Natural killer cell (primary cell): ENCODE measurements at regions of chr13 and their contacts with region 1.

Region 1: DNA sequence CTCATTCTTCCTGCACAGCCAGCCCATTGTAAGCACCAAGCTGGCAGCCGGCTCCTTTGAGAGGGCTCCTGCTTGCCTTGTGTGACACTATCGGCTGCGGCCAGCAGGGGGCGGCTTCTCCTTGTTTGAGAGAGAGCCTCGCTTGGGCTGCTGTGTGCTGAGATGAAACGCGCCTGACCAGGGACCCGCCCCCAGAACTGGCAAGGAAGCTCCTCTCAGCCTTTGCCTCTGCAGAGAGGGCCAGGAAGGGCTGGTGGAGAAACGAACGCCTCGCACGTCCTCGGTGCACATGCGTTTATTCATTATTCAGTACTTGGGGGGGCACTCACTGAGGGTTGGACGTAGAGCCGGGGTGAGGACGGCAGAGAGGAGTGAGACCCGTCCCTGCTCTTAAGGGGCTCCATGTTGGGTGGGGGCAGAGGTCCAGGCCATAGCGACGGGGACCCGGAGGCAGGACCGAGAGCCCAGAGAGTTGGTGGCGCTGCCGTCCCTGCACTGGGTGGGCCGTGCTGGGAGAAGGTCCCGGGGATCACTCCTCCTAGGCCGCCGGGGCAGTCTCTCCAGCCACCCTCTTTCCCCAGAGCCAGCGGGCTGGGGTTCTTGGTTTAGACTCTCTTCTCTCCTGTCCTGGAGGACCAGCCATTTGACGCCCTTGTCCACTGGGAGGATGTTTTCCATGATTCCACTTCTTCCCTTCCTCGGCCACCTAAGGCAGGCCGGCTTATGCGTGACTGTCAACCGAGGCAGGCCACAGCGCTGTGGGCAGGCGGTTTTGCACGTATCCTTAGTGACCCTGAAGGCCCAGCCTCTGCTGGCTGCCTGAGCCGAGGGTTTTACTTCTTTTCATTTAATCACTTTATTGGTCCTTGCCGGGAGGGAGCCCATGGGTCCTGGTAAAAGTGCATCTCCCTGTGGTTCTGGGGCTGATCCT is 174.5 kb downstream of the KATNAL1 start:
- DNase-seq: peak; percentile 95 to 96
- ATAC-seq: peak; percentile 97 to 100 (median 100)
- H3K4me3 ChIP-seq: no peak overlapping the region
- H3K4me3 Mint-ChIP-seq: peak overlapping the region; percentile 78
- H3K27ac ChIP-seq: no peak overlapping the region
- H3K27ac Mint-ChIP-seq: peak overlapping the region; percentile 29 to 78
- H3K4me1 ChIP-seq: peaks cover 12% of the 10 kb centered on the region
- H3K4me1 Mint-ChIP-seq: peaks cover 20 to 23% of the 10 kb centered on the region in 2 donors
- H3K27me3 ChIP-seq: no peaks in the 10 kb centered on the region
- H3K27me3 Mint-ChIP-seq: no peaks in the 10 kb centered on the region
- CTCF ChIP-seq: peak; percentile 95

Region 2: DNA sequence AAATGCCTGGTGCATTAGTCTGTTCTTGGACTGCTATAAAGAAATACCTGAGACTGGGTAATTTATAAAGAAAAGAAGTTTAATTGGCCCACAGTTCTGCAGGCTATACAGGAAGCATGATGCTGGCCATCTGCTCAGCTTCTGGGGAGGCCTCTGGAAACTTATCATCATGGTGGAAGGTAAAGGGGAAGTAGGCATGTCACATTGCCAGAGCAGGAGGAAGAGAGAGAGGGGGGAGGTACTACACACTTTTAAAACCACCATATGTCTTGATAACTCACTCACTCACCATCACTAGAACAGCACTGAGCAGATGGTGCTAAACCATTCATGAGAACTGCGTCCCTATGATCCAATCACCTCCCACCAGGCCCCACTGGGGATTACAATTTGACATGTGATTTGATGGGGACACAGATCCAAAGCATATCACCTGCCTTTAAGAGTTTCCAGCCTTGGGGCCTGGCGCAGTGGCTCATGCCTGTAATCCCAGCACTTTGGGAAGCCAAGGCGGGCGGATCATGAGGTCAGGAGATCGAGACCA is 44.5 kb before region 1 on chr13:
- intact Hi-C with region 1: no loop called
- DNase-seq: no peak
- ATAC-seq: no peak
- H3K4me3 ChIP-seq: no peak overlapping the region
- H3K4me3 Mint-ChIP-seq: no peak overlapping the region
- H3K27ac ChIP-seq: no peak overlapping the region
- H3K27ac Mint-ChIP-seq: no peak overlapping the region
- H3K4me1 ChIP-seq: peaks cover 4% of the 10 kb centered on the region
- H3K4me1 Mint-ChIP-seq: peaks cover 0 to 9% of the 10 kb centered on the region in 2 donors
- H3K27me3 ChIP-seq: no peaks in the 10 kb centered on the region
- H3K27me3 Mint-ChIP-seq: peaks cover 4 to 12% of the 10 kb centered on the region in 2 donors
- CTCF ChIP-seq: no peak

Region 3: DNA sequence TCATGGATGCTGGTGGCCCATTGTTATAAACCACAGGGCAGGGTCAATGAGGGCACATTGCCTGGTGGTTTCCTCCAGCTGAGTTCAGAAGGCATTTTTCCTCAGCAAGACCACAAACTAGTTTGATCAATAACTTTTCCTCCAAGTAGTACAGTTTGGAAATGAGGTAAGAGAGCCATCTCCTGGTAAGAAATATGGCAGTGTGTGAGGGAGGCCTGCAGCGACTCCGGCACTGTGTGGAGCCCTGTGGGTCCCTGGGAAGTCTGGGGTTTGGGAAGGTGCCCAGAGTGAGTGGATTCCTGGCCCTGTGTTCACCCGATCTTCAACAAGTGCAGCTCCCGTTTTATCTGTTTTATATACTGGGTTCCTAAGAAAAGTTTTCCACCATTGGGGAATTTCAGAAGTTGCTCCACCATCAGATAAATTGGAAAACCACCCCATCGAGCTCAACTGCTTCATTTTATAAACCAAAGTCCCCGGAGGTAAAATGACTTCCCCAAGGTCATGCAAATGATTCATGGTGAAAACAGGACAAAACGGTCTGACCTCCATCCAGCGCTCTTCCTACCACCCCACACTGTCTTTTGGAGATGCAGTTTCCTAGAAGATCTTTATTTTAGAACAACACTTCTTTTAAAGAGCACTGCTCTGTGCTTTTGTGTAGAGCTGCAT is 26.0 kb after region 1 on chr13:
- intact Hi-C with region 1: loop called (anchors 1 kb)
- DNase-seq: peak in 1 of 2 donors; percentile 73
- ATAC-seq: peak; percentile 39 to 59 (median 55)
- H3K4me3 ChIP-seq: no peak overlapping the region
- H3K4me3 Mint-ChIP-seq: no peak overlapping the region
- H3K27ac ChIP-seq: no peak overlapping the region
- H3K27ac Mint-ChIP-seq: peak overlapping the region; percentile 74 to 95
- H3K4me1 ChIP-seq: peaks cover 55% of the 10 kb centered on the region
- H3K4me1 Mint-ChIP-seq: peaks cover 48 to 55% of the 10 kb centered on the region in 2 donors
- H3K27me3 ChIP-seq: no peaks in the 10 kb centered on the region
- H3K27me3 Mint-ChIP-seq: no peaks in the 10 kb centered on the region
- CTCF ChIP-seq: peak; percentile 51

Region 4: DNA sequence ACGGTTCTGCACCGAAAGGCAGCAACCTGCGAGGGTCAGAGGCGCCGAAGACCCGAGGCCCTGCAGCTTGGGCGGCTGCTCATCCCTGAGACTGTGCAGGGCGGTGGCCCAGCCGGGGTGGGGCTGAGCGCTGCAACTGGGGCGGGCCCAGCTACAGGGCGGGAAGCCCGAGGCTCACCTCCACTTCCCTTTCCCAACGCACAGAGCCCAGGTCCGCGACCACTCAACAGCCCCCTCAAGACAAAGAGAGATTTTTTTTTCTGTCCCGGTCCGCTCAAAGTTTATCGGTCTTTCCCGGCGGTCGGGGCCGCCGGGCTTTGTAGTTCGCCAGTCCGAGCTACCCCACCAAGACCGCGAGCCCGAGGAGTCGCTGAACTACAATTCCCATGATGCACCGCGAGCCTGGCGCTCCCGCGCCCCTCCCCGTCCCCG is 173.9 kb after region 1 on chr13:
- intact Hi-C with region 1: loop called (anchors 10 kb)
- DNase-seq: peak; percentile 82 to 95
- ATAC-seq: peak; percentile 88 to 96 (median 94)
- H3K4me3 ChIP-seq: peak overlapping the region; percentile 83
- H3K4me3 Mint-ChIP-seq: peak overlapping the region; percentile 88
- H3K27ac ChIP-seq: peak overlapping the region; percentile 79
- H3K27ac Mint-ChIP-seq: peak overlapping the region; percentile 42 to 89
- H3K4me1 ChIP-seq: peaks cover 12% of the 10 kb centered on the region
- H3K4me1 Mint-ChIP-seq: peaks cover 4 to 18% of the 10 kb centered on the region in 2 donors
- H3K27me3 ChIP-seq: no peaks in the 10 kb centered on the region
- H3K27me3 Mint-ChIP-seq: no peaks in the 10 kb centered on the region
- CTCF ChIP-seq: no peak

Region 5: DNA sequence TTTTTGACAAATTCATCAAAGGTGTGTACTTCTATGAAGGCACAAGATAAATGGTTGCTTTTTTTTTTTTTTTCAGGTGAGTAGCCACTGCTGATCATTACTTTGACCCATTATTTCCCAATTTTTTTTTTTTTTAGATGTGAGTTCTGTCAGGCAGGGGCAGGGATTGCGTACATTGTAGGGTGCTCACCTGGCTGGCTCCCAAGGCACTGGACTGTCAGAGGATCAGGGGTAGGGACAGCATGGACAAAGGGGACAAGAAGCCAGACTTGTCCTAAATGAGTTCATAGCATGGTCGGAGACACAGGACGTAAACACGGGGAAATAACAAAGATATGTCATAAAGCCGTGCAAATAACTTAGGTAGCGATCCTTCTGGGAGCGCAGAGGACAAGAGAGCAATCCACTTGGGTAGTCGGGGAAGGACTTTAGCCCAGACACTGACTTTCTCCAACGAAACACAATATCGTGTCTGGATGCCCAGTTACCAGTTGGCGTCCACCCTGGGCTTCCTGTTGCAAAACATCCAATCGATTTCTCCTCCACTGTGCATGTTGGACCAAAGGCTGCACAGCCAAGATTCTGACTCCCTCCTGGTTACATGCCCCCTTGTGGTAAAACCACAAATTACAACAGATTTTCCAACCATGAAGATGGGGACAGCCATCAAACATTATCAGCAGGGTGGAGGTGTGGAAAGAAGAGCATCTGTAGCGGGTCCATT is 201.9 kb after region 1 on chr13:
- intact Hi-C with region 1: loop called (anchors 2 kb)
- DNase-seq: peak in 1 of 2 donors; percentile 64
- ATAC-seq: peak in 2 of 3 donors; percentile 44 to 64
- H3K4me3 ChIP-seq: no peak overlapping the region
- H3K4me3 Mint-ChIP-seq: no peak overlapping the region
- H3K27ac ChIP-seq: no peak overlapping the region
- H3K27ac Mint-ChIP-seq: no peak overlapping the region
- H3K4me1 ChIP-seq: peaks cover 6% of the 10 kb centered on the region
- H3K4me1 Mint-ChIP-seq: peaks cover 0 to 6% of the 10 kb centered on the region in 2 donors
- H3K27me3 ChIP-seq: no peaks in the 10 kb centered on the region
- H3K27me3 Mint-ChIP-seq: no peaks in the 10 kb centered on the region
- CTCF ChIP-seq: peak; percentile 29

Region 6: GRCh38 chr13:30572859-30573275 is 440.0 kb after region 1 on chr13:
- intact Hi-C with region 1: loop called (anchors 10 kb)
- DNase-seq: peak in 1 of 2 donors; percentile 67
- ATAC-seq: peak; percentile 69 to 77 (median 69)
- H3K4me3 ChIP-seq: peak overlapping the region; percentile 5
- H3K4me3 Mint-ChIP-seq: peak overlapping the region; percentile 75
- H3K27ac ChIP-seq: peak overlapping the region; percentile 66
- H3K27ac Mint-ChIP-seq: peak overlapping the region; percentile 80 to 83
- H3K4me1 ChIP-seq: peaks cover 25% of the 10 kb centered on the region
- H3K4me1 Mint-ChIP-seq: peaks cover 33 to 40% of the 10 kb centered on the region in 2 donors
- H3K27me3 ChIP-seq: no peaks in the 10 kb centered on the region
- H3K27me3 Mint-ChIP-seq: peaks cover 21 to 25% of the 10 kb centered on the region in 2 donors
- CTCF ChIP-seq: no peak

Region 7: GRCh38 chr13:30802953-30803478 is 670.1 kb after region 1 on chr13:
- intact Hi-C with region 1: loop called (anchors 5 kb)
- DNase-seq: peak; percentile 73 to 90
- ATAC-seq: peak; percentile 92 to 99 (median 99)
- H3K4me3 ChIP-seq: peak overlapping the region; percentile 21
- H3K4me3 Mint-ChIP-seq: peak overlapping the region; percentile 66
- H3K27ac ChIP-seq: no peak overlapping the region
- H3K27ac Mint-ChIP-seq: peak overlapping the region in 1 of 2 donors; percentile 81
- H3K4me1 ChIP-seq: peaks cover 10% of the 10 kb centered on the region
- H3K4me1 Mint-ChIP-seq: peaks cover 14% of the 10 kb centered on the region in 2 donors
- H3K27me3 ChIP-seq: no peaks in the 10 kb centered on the region
- H3K27me3 Mint-ChIP-seq: no peaks in the 10 kb centered on the region
- CTCF ChIP-seq: peak; percentile 98

Region 8: DNA sequence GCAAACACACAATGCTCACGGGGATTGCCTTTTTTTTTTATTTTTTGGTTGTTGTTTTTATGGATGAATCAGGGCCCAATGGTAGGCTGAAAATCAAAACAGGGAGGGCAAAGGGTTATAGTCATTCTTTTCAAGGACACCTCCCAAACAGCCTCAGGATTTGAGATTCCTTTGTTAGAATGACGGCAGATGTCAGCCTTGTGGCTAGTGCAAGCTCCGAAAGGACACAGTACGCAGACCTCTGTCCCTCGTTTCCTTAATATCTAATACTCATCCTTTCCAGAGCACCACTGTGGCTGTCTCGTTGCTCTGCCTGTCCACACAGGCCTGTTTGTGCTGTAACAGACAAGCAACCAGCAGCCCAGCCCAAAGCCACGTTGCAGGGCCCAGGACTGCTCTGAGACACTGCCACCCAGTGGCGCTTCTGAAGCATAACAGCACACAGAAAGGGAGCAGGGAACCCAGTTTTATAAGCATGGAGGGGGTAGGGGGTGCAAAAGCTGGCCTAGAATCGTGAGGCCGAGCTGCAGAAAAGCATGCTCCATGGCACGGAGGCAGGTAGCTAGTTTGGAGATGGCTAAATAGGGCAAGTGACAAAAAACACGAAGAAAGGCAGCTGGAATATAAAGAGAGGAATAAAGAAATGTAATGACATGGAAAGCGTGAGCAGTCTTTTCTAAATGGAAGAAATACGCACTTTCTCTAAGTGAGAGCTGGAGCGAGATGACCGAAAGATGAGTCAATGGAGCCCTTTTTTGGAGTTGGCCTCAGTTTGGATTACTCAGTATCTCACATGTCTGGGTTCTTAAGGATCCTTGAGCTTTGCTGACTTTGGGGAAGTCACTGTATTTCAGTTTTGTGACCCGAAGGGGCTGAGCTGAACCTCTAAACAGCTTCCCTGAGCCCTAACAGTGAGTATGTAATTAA is 732.5 kb after region 1 on chr13:
- intact Hi-C with region 1: loop called (anchors 1 kb)
- DNase-seq: peak; percentile 30 to 73
- ATAC-seq: peak; percentile 86 to 98 (median 95)
- H3K4me3 ChIP-seq: no peak overlapping the region
- H3K4me3 Mint-ChIP-seq: no peak overlapping the region
- H3K27ac ChIP-seq: no peak overlapping the region
- H3K27ac Mint-ChIP-seq: no peak overlapping the region
- H3K4me1 ChIP-seq: no peaks in the 10 kb centered on the region
- H3K4me1 Mint-ChIP-seq: peaks cover 6% of the 10 kb centered on the region in 2 donors
- H3K27me3 ChIP-seq: peaks cover 2% of the 10 kb centered on the region
- H3K27me3 Mint-ChIP-seq: peaks cover 3 to 10% of the 10 kb centered on the region in 2 donors
- CTCF ChIP-seq: peak; percentile 89